ENCODE measurements at regions of chr1 and their contacts with region 1.

Region 1: GRCh38 chr1:244280859-244281258 is 170.8 kb downstream of the ADSS2 start:
- DNase-seq: peak; percentile 78
- ATAC-seq: peak; percentile 87
- H3K4me3 ChIP-seq: no peak overlapping the region
- H3K27ac ChIP-seq: no peak overlapping the region
- H3K4me1 ChIP-seq: peaks cover 14% of the 10 kb centered on the region
- H3K27me3 ChIP-seq: no peaks in the 10 kb centered on the region
- CTCF ChIP-seq: no peak

Region 2: GRCh38 chr1:244089561-244089960 is 191.3 kb before region 1 on chr1:
- CTCF ChIA-PET with region 1: interaction called, 10 read pairs
- POLR2A ChIA-PET with region 1: no interaction called
- intact Hi-C with region 1: no loop called
- DNase-seq: no peak
- ATAC-seq: no peak
- H3K4me3 ChIP-seq: no peak overlapping the region
- H3K27ac ChIP-seq: no peak overlapping the region
- H3K4me1 ChIP-seq: peaks cover 10% of the 10 kb centered on the region; the same call in 1 of the 2 replicates
- H3K27me3 ChIP-seq: no peaks in the 10 kb centered on the region
- CTCF ChIP-seq: no peak

Measured in PC-3 (cell line).